ENCODE measurements at regions of chr4 and their contacts with region 1.

Region 1: GRCh38 chr4:2041234-2042130 is 17.6 kb upstream of the NAT8L start:
- DNase-seq: peak; percentile 55 to 77
- H3K4me3 ChIP-seq: peak overlapping the region; percentile 90
- H3K27ac ChIP-seq: no peak overlapping the region
- H3K4me1 ChIP-seq: peaks cover 13% of the 10 kb centered on the region; the same call in 1 of the 2 replicates
- H3K27me3 ChIP-seq: no peaks in the 10 kb centered on the region
- CTCF ChIP-seq: no peak

Region 2: GRCh38 chr4:2095789-2096570 is 54.5 kb after region 1 on chr4:
- CTCF ChIA-PET with region 1: no interaction called
- POLR2A ChIA-PET with region 1: no interaction called
- intact Hi-C with region 1: loop called (anchors 10 kb)
- DNase-seq: peak; percentile 77 to 83
- H3K4me3 ChIP-seq: no peak overlapping the region
- H3K27ac ChIP-seq: no peak overlapping the region
- H3K4me1 ChIP-seq: 0 out of 2 replicates have a peak, but pooled peaks cover 11% of the 10 kb centered on the region
- H3K27me3 ChIP-seq: no peaks in the 10 kb centered on the region
- CTCF ChIP-seq: no peak